B cell (primary cell): ENCODE measurements at regions of chr14 and their contacts with region 1.

Region 1: GRCh38 chr14:69726761-69727511 is 40.0 kb upstream of the SRSF5 start:
- DNase-seq: peak; percentile 89
- ATAC-seq: peak; percentile 93
- H3K4me3 ChIP-seq: peak overlapping the region in 4 of 5 experiments; percentile 26 to 77 (median 58)
- H3K4me3 Mint-ChIP-seq: peak overlapping the region; percentile 83
- H3K27ac ChIP-seq: peak overlapping the region in 1 of 2 donors; percentile 48
- H3K27ac Mint-ChIP-seq: peak overlapping the region; percentile 37
- H3K4me1 ChIP-seq: peaks cover 4 to 12% of the 10 kb centered on the region in 2 donors
- H3K4me1 Mint-ChIP-seq: peaks cover 12% of the 10 kb centered on the region
- H3K27me3 ChIP-seq: no peaks in the 10 kb centered on the region
- H3K27me3 Mint-ChIP-seq: peaks cover 3% of the 10 kb centered on the region
- CTCF ChIP-seq: peak; percentile 99

Region 2: GRCh38 chr14:69242311-69243224 is 484.4 kb before region 1 on chr14:
- CTCF ChIA-PET with region 1: no interaction called
- POLR2A ChIA-PET with region 1: no interaction called
- intact Hi-C with region 1: loop called (anchors 10 kb)
- DNase-seq: peak; percentile 73
- ATAC-seq: peak; percentile 65
- H3K4me3 ChIP-seq: no peak overlapping the region
- H3K4me3 Mint-ChIP-seq: no peak overlapping the region
- H3K27ac ChIP-seq: no peak overlapping the region
- H3K27ac Mint-ChIP-seq: no peak overlapping the region
- H3K4me1 ChIP-seq: no peaks in the 10 kb centered on the region
- H3K4me1 Mint-ChIP-seq: peaks cover 3% of the 10 kb centered on the region
- H3K27me3 ChIP-seq: no peaks in the 10 kb centered on the region
- H3K27me3 Mint-ChIP-seq: no peaks in the 10 kb centered on the region
- CTCF ChIP-seq: peak; percentile 87

Region 3: GRCh38 chr14:69586404-69586803 is 140.5 kb before region 1 on chr14:
- CTCF ChIA-PET with region 1: interaction called, 101 read pairs
- POLR2A ChIA-PET with region 1: interaction called, 3 read pairs
- intact Hi-C with region 1: loop called (anchors 1 kb)
- DNase-seq: no peak
- ATAC-seq: no peak
- H3K4me3 ChIP-seq: no peak overlapping the region
- H3K4me3 Mint-ChIP-seq: no peak overlapping the region
- H3K27ac ChIP-seq: no peak overlapping the region
- H3K27ac Mint-ChIP-seq: no peak overlapping the region
- H3K4me1 ChIP-seq: peaks cover 0 to 1% of the 10 kb centered on the region in 2 donors
- H3K4me1 Mint-ChIP-seq: peaks cover 2% of the 10 kb centered on the region
- H3K27me3 ChIP-seq: no peaks in the 10 kb centered on the region
- H3K27me3 Mint-ChIP-seq: peaks cover 5% of the 10 kb centered on the region
- CTCF ChIP-seq: no peak

Region 4: DNA sequence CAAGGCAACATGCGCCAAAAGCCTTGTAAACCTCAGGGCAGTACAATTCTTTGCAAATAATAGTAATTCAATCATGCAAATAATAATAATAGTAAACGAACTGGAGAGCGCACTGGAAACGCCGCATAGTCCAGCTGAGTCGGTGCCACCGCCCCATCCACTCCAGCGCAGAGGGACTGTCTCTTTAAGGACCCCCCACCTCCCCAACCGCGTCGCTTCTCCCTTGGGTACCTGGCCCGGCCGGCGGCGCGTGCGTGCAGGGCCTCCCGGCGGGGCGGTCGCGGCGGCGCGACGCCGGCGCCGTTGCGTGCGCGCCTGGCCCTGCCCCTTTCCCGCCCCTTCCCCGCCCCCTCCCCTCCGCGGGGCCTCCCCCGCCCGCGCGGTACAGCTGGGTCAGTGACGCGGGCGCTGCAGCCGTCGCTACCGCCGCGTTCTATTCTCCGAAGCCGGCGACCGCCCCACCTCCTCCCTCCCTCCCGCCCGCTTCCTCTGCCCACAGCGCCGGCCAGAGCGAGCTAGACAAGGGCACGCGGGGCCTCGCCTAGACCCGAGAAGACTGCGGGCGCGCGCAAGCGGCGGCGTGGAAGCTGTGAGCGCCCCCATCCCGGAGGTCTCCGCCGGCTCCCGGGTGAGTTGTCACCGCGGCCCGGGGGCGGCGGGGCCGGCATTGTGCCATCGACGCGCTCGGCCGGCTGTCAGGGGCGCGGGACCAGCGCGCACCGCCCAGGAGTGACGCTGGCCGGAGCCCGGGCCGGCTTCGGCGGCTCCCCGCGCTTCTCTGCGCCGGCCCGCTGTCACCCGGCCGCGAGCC is 115.5 kb before region 1 on chr14 and contains the start of gene SUSD6:
- CTCF ChIA-PET with region 1: interaction called, 112 read pairs
- POLR2A ChIA-PET with region 1: interaction called, 8 read pairs
- intact Hi-C with region 1: no loop called
- DNase-seq: peak; percentile 93
- ATAC-seq: peak; percentile 65
- H3K4me3 ChIP-seq: peak within 1 kb of the TSS; percentile 67 to 92 (median 76)
- H3K4me3 Mint-ChIP-seq: peak within 1 kb of the TSS; percentile 98
- H3K27ac ChIP-seq: peak within 1 kb of the TSS; percentile 80 to 92
- H3K27ac Mint-ChIP-seq: peak within 1 kb of the TSS; percentile 98
- H3K4me1 ChIP-seq: peaks cover 51 to 55% of the 10 kb centered on the region in 2 donors
- H3K4me1 Mint-ChIP-seq: peaks cover 54% of the 10 kb centered on the region
- H3K27me3 ChIP-seq: no peaks in the 10 kb centered on the region
- H3K27me3 Mint-ChIP-seq: no peaks in the 10 kb centered on the region
- CTCF ChIP-seq: no peak
- total RNA-seq, gene SUSD6: 97.8 and 115 TPM in 2 replicates

Region 5: DNA sequence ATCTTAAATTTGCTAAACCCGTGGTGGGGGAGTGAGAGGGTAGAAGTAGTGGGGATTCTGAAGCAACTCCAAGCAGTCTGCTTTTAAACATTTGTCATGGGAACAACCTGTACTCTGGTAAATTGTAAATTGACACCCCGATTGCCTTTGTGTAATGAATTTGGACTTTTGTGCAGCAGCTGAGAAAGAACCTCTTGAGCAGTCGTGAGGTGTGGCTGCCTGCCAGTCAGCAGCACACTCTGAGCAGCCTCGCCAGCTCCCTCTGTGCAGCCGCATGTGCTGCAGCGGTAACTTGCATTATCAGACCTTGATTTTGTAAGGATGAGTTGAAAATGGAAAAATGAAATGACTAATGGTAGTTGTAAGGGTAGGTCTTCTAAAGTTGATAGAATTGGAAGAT is 41.2 kb before region 1 on chr14:
- CTCF ChIA-PET with region 1: interaction called, 3 read pairs
- POLR2A ChIA-PET with region 1: interaction called, 17 read pairs
- intact Hi-C with region 1: no loop called
- DNase-seq: no peak
- ATAC-seq: no peak
- H3K4me3 ChIP-seq: no peak overlapping the region
- H3K4me3 Mint-ChIP-seq: no peak overlapping the region
- H3K27ac ChIP-seq: no peak overlapping the region
- H3K27ac Mint-ChIP-seq: peak overlapping the region; percentile 32
- H3K4me1 ChIP-seq: peaks cover 51 to 53% of the 10 kb centered on the region in 2 donors
- H3K4me1 Mint-ChIP-seq: peaks cover 78% of the 10 kb centered on the region
- H3K27me3 ChIP-seq: no peaks in the 10 kb centered on the region
- H3K27me3 Mint-ChIP-seq: no peaks in the 10 kb centered on the region
- CTCF ChIP-seq: no peak